ENCODE measurements at regions of chr11 and their contacts with region 1.

Region 1: GRCh38 chr11:83819933-83820549 is 533.9 kb upstream of the CCDC90B start:
- DNase-seq: no peak
- ATAC-seq: peak; percentile 79
- H3K4me3 ChIP-seq: no peak overlapping the region
- H3K27ac ChIP-seq: no peak overlapping the region
- H3K4me1 ChIP-seq: no peaks in the 10 kb centered on the region
- H3K27me3 ChIP-seq: no peaks in the 10 kb centered on the region
- CTCF ChIP-seq: peak; percentile 20 to 62 (median 29); a peak in 4 of 6 replicates
- EP300 ChIP-seq: no peak
- POLR2A ChIP-seq: no peak
- RAD21 ChIP-seq: peak; percentile 79

Region 2: GRCh38 chr11:82718307-82718706 is 1101.7 kb before region 1 on chr11:
- CTCF ChIA-PET with region 1: interaction called, 16 read pairs
- POLR2A ChIA-PET with region 1: no interaction called
- RAD21 ChIA-PET with region 1: interaction called, 4 read pairs
- SMC1A ChIA-PET with region 1: no interaction called
- in situ Hi-C with region 1: loop called (anchors 10 kb)
- intact Hi-C with region 1: loop called (anchors 5 kb)
- DNase-seq: no peak
- ATAC-seq: peak; percentile 75
- H3K4me3 ChIP-seq: no peak overlapping the region
- H3K27ac ChIP-seq: no peak overlapping the region
- H3K4me1 ChIP-seq: no peaks in the 10 kb centered on the region
- H3K27me3 ChIP-seq: no peaks in the 10 kb centered on the region
- CTCF ChIP-seq: peak; percentile 72 to 75 (median 73)
- EP300 ChIP-seq: no peak
- POLR2A ChIP-seq: no peak
- RAD21 ChIP-seq: peak; percentile 76

Region 3: DNA sequence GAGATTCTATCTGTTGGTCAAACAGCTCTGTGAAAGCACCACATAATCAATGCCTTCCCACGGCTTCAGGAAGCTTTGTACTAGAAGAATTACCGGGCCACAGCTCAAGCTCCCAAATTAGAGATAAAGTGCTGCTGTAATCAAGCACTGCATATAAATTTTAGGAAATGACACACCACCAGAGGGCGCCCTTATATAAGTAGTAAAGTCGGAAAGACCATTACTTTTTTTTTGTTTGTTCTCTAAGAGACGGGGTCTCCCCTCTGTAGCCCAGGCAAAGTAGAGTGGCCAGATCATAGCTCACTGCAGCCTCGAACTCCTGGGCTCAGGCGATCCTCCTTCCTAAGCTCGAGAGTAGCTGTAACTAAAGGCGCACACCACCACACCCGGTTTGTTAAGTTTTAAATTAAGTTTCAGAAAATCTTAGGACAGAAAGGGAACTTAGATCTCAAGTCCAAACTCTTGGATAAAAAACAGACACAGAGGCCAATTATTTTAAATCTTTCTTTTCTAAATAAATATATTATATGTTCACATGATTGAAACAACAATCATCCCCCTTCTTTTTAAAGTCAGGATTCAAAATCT is 952.5 kb before region 1 on chr11:
- CTCF ChIA-PET with region 1: interaction called, 19 read pairs
- POLR2A ChIA-PET with region 1: no interaction called
- RAD21 ChIA-PET with region 1: interaction called, 4 read pairs
- SMC1A ChIA-PET with region 1: interaction called, 6 read pairs
- in situ Hi-C with region 1: loop called (anchors 5 kb)
- intact Hi-C with region 1: loop called (anchors 5 kb)
- DNase-seq: peak; percentile 26
- ATAC-seq: peak; percentile 74
- H3K4me3 ChIP-seq: no peak overlapping the region
- H3K27ac ChIP-seq: no peak overlapping the region
- H3K4me1 ChIP-seq: peaks cover 7% of the 10 kb centered on the region
- H3K27me3 ChIP-seq: no peaks in the 10 kb centered on the region
- CTCF ChIP-seq: peak; percentile 53 to 75 (median 64); a peak in 5 of 6 replicates
- EP300 ChIP-seq: no peak
- POLR2A ChIP-seq: no peak
- RAD21 ChIP-seq: peak; percentile 81

Region 4: GRCh38 chr11:83087035-83087434 is 733.0 kb before region 1 on chr11:
- CTCF ChIA-PET with region 1: interaction called, 3 read pairs
- POLR2A ChIA-PET with region 1: no interaction called
- RAD21 ChIA-PET with region 1: no interaction called
- SMC1A ChIA-PET with region 1: no interaction called
- in situ Hi-C with region 1: no loop called
- intact Hi-C with region 1: loop called (anchors 10 kb)
- DNase-seq: no peak
- ATAC-seq: peak; percentile 68
- H3K4me3 ChIP-seq: no peak overlapping the region
- H3K27ac ChIP-seq: no peak overlapping the region
- H3K4me1 ChIP-seq: no peaks in the 10 kb centered on the region
- H3K27me3 ChIP-seq: no peaks in the 10 kb centered on the region
- CTCF ChIP-seq: peak in 2 of 3 experiments; percentile 18 to 44; a peak in 1 of 6 replicates
- EP300 ChIP-seq: no peak
- POLR2A ChIP-seq: no peak
- RAD21 ChIP-seq: peak; percentile 50

Region 5: DNA sequence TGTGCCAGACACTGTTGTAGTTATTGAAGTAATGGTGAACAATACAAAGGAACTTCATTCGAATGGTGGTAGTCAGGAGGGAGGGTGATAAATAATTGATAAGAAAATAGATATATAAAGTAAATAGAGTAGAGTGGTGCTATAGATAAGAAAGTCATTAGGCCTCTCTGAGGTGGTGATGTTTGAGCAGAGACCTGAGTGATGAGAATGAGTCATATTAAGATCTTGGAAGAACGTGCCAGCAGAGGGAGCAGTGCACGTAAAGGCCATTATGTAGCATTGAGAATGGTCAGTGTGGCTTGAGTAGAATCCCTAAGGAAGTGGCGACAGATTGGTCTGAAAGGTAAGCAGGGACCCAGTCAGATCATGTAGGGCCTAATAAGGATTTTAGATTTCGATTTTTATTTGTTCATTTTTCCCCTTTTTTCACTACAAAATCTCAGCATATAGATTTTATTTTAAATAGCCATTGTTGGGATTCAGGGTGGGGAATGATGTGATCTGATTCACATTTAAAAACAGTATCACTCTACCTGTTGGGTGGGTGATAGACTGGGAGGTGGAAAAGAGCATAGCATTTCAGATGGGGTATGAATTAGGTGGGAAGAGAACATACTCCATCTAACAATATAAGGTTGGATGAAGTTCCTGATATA is 578.6 kb before region 1 on chr11:
- CTCF ChIA-PET with region 1: interaction called, 3 read pairs
- POLR2A ChIA-PET with region 1: no interaction called
- RAD21 ChIA-PET with region 1: no interaction called
- SMC1A ChIA-PET with region 1: interaction called, 6 read pairs
- in situ Hi-C with region 1: loop called (anchors 10 kb)
- intact Hi-C with region 1: loop called (anchors 5 kb)
- DNase-seq: no peak
- ATAC-seq: peak; percentile 82
- H3K4me3 ChIP-seq: no peak overlapping the region
- H3K27ac ChIP-seq: no peak overlapping the region
- H3K4me1 ChIP-seq: no peaks in the 10 kb centered on the region
- H3K27me3 ChIP-seq: no peaks in the 10 kb centered on the region
- CTCF ChIP-seq: peak; percentile 39 to 45 (median 45); a peak in 4 of 6 replicates
- EP300 ChIP-seq: no peak
- POLR2A ChIP-seq: no peak
- RAD21 ChIP-seq: peak; percentile 31; the same call in 1 of the 2 replicates

Region 6: GRCh38 chr11:83292709-83293456 is 527.2 kb before region 1 on chr11:
- CTCF ChIA-PET with region 1: interaction called, 56 read pairs
- POLR2A ChIA-PET with region 1: no interaction called
- RAD21 ChIA-PET with region 1: interaction called, 16 read pairs
- SMC1A ChIA-PET with region 1: interaction called, 15 read pairs
- in situ Hi-C with region 1: loop called (anchors 5 kb)
- intact Hi-C with region 1: loop called (anchors 1 kb)
- DNase-seq: no peak
- ATAC-seq: peak; percentile 86
- H3K4me3 ChIP-seq: no peak overlapping the region
- H3K27ac ChIP-seq: no peak overlapping the region
- H3K4me1 ChIP-seq: peaks cover 12% of the 10 kb centered on the region; the same call in 1 of the 2 replicates
- H3K27me3 ChIP-seq: no peaks in the 10 kb centered on the region
- CTCF ChIP-seq: peak; percentile 65 to 74 (median 70)
- EP300 ChIP-seq: no peak
- POLR2A ChIP-seq: no peak
- RAD21 ChIP-seq: peak; percentile 60

Region 7: DNA sequence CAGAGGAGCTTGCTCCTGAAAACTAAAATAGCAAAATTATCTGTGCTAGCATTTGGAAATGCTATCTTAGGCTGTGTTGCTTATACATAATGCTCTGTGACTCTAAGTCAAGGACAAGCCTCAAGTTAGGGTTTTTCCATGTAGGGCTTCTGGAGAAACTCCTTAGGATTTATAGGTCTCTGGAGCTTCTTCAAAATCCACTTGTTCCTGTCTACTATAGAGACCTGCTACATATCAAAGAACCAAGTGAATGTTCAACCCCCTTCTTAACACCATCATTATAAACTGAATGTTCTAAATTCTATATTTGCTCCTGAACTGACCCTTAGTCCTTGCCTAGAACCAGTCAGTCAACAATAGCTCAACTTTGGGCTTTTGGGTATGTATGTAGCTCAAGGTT is 10.8 kb before region 1 on chr11:
- CTCF ChIA-PET with region 1: interaction called, 12 read pairs
- POLR2A ChIA-PET with region 1: no interaction called
- RAD21 ChIA-PET with region 1: interaction called, 4 read pairs
- SMC1A ChIA-PET with region 1: interaction called, 3 read pairs
- in situ Hi-C with region 1: no loop called
- intact Hi-C with region 1: no loop called
- DNase-seq: no peak
- ATAC-seq: no peak
- H3K4me3 ChIP-seq: no peak overlapping the region
- H3K27ac ChIP-seq: no peak overlapping the region
- H3K4me1 ChIP-seq: no peaks in the 10 kb centered on the region
- H3K27me3 ChIP-seq: peaks cover 0 to 2% of the 10 kb centered on the region in 2 experiments; a peak in 2 of 4 replicates
- CTCF ChIP-seq: no peak
- EP300 ChIP-seq: no peak
- POLR2A ChIP-seq: no peak
- RAD21 ChIP-seq: no peak